Endothelial cell of umbilical vein (primary cell): ENCODE measurements at regions of chr19 and their contacts with region 1.

Region 1: DNA sequence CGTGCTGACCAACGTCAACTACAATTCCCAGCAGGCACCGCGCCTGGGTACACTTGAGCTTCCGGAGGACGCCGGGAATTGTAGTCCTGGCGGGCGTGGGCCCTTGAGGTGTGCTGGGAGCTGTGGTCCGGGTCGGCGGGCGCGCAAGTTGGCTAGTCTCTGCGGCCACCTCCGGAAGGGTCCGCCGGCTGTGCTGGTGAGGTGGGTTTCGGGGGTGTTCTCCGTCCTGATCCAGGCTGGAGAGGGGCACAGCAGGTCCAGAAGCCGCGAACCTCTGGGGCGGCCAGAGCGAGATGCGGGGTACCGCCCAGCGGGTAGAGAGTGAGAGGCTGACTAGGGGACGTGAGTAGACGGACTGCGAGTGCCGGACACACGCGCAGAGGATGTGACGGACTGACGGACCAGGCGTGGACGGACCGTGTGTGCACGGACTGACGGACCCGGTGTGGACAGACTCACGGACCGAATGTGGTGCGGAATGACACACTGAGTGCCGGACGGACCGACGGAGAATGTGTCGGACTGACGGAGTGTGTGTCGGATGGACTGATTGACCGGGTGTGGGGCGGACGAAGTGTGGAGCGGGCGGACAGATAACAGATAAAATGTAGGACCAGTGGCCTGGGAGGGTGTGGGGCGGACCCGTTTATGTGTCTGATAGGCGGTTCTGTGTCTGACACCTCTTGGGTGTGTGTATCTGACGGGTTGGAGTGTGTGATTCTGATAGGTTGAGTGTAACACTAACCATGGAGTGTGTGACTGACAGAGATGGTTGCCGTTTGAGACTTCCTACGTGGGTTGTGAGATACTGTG is at the start of gene ZSCAN22:
- DNase-seq: peak; percentile 96
- H3K4me3 ChIP-seq: peak within 1 kb of the TSS; percentile 3 to 63 (median 56)
- H3K27ac ChIP-seq: peak within 1 kb of the TSS; percentile 1
- H3K4me1 ChIP-seq: peaks cover 12% of the 10 kb centered on the region
- H3K27me3 ChIP-seq: no peaks in the 10 kb centered on the region
- CTCF ChIP-seq: no peak
- POLR2A ChIP-seq: peak; percentile 76
- total RNA-seq, gene ZSCAN22: 3.6 and 3.7 TPM in 2 replicates

Region 2: DNA sequence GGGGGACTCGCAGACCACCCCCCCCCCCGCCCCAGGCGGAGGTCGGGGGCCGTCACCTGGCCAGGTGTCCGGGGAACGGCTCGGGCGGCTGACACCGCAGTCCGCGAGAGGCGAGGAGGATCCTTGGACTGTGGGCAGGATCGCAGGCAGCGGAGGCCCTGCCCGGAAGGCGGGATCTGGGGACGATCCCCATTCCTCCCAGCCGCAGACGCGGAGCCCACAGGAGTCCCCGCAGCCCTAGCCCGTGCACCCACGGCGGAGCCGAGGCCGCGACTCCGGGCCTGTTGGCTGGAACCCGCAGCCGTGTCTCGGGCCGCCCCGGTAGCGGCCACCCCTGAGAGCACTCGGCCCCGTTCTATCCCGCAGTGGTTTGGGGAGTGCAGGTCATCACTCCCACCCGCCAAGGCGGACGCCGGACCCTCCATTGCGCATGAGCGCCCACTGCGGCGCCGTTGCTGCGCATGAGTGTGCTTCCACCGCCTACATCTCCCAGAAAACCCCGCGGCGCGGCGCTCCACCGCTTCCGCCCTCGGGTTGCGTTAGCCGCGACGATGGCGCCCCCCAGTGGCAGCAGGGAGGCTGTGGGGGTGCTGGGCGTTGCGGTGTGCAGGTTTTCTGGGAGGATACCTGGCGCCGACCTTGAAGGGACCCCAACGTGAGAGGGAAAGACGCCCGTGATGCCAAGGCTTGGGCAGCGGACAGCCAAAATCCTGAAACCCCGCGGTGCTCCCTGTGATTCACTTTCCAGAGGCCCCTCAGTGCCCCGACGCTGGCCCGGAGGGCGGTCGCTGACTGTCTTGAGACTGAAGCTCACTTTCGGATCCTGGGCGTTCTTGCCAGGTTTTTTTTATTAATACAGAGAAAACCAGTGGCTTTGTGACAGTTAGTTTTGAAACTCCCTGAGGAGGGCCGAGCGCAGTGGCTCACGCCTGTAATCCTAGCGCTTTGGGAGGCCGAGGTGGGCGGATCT is 172.2 kb before region 1 on chr19:
- CTCF ChIA-PET with region 1: no interaction called
- POLR2A ChIA-PET with region 1: no interaction called
- dilution Hi-C with region 1: no loop called
- intact Hi-C with region 1: no loop called
- DNase-seq: peak; percentile 93
- H3K4me3 ChIP-seq: peak overlapping the region; percentile 39 to 75 (median 63)
- H3K27ac ChIP-seq: no peak overlapping the region
- H3K4me1 ChIP-seq: no peaks in the 10 kb centered on the region
- H3K27me3 ChIP-seq: no peaks in the 10 kb centered on the region
- CTCF ChIP-seq: peak; percentile 96 to 99
- POLR2A ChIP-seq: peak; percentile 74

Region 3: DNA sequence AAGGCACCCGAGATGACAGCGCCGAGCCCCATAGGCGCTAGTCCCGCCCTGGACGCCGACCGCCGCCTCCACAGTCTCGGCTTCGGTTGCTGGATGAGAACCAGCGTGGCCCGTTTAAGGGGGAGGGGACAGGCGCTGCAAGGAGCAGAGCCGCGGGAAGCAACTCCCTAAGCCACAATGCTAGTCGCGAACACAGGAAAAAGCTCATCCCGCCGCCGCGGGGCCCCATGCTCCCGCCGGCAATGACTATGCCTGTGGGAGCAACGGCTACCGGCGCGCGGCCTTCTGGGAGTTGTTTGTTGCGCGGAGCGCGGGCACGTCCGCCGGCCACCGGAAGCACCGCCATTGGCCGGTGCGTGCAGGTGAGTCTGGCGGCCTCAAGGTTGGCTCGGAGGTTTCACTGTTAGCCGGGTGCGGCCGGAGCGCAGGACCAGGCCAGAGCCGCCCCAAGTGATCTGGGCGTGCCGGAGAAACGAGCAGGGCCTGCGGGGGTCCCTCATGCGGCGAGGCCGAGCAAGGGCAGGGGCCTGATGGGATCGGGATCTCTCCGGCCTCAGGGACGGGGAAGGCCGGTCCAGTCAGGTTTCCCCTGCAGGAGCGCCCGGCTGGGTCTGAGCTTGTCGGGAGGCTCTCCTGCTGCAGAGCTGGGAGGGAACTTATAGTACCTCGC is 98.4 kb before region 1 on chr19 and contains the start of gene ZNF544:
- CTCF ChIA-PET with region 1: interaction called, 5 read pairs
- POLR2A ChIA-PET with region 1: no interaction called
- dilution Hi-C with region 1: no loop called
- intact Hi-C with region 1: loop called (anchors 1 kb)
- DNase-seq: peak; percentile 84
- H3K4me3 ChIP-seq: peak within 1 kb of the TSS; percentile 53 to 66 (median 61)
- H3K27ac ChIP-seq: peak within 1 kb of the TSS; percentile 42
- H3K4me1 ChIP-seq: peaks cover 10% of the 10 kb centered on the region
- H3K27me3 ChIP-seq: no peaks in the 10 kb centered on the region
- CTCF ChIP-seq: peak; percentile 6 to 40
- POLR2A ChIP-seq: peak; percentile 92
- total RNA-seq, gene ZNF544: 39.3 and 45.4 TPM in 2 replicates

Region 4: DNA sequence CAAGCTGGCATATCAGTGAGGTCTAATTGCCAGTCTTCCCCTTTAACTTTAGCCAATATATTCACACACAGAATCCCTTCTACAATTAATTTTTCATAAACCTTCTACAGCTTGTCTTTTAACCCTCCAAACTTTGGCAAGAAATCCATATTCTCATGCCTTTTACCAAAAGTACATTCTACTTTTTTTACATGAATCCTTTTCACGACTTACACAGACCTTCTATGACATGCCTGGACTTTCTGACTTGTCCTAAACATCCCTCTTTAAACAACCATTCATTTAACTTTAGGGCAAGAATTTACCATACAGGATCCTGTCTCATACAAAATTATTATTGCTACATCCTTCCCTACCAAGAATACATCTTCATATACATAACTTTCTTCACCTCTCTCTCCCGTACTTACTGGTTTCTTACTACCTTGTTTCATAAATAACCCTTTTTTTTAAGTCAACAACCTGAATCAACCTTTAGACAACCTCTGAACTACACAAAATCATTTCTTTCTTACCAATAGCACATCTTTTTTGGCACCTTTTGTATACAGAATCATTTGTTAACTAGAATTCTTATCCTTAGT is 74.9 kb before region 1 on chr19:
- CTCF ChIA-PET with region 1: no interaction called
- POLR2A ChIA-PET with region 1: no interaction called
- dilution Hi-C with region 1: no loop called
- intact Hi-C with region 1: no loop called
- DNase-seq: no peak
- H3K4me3 ChIP-seq: no peak overlapping the region
- H3K27ac ChIP-seq: no peak overlapping the region
- H3K4me1 ChIP-seq: no peaks in the 10 kb centered on the region
- H3K27me3 ChIP-seq: no peaks in the 10 kb centered on the region
- CTCF ChIP-seq: no peak
- POLR2A ChIP-seq: no peak

Region 5: DNA sequence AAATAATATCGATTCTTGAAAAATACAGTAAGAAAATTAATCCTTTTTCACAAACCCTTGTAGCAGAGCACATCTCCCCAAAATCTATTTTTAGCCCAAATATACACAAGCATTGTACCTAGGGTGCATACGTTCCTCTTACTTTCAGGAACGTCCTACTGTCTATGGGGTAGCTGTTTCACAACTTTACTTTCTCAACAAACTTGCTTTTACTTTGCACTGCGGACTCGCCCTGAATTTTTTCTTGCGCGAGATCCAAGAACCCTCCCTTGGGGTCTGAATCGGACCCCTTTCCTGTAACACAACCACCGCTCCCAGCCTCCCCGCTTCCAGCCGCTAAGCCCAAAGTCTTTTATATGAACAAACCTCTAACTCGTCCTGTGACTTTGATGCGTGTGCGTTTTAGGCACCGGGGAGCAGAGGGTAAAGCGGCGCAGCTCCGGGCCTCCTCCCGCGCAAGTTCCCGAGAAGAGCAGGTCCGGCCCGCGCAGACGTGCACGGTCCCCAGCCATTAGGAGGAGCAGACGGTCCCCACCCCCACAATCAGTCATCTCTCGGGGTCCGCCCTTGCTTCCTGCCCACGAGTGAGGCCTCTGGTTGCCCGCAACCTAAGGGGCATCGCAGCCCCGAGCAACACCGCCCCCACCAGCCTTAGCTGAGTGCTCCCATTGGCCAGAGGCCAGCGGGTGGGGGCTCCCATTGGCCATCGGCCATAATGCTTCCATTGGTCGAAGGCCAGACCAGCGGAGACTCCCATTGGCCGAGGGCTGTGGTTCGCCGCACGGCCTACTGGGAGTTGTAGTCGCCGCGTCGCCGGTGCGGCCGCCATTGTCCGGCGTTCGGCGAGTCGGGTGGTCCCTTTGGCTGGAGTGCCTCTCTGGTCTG is 48.7 kb before region 1 on chr19 and contains the start of gene ZNF8:
- CTCF ChIA-PET with region 1: no interaction called
- POLR2A ChIA-PET with region 1: no interaction called
- dilution Hi-C with region 1: no loop called
- intact Hi-C with region 1: loop called (anchors 2 kb)
- DNase-seq: peak; percentile 99
- H3K4me3 ChIP-seq: peak within 1 kb of the TSS; percentile 67 to 72 (median 70)
- H3K27ac ChIP-seq: peak within 1 kb of the TSS; percentile 76
- H3K4me1 ChIP-seq: peaks cover 8% of the 10 kb centered on the region
- H3K27me3 ChIP-seq: no peaks in the 10 kb centered on the region
- CTCF ChIP-seq: peak in 1 of 2 donors; percentile 22
- POLR2A ChIP-seq: peak; percentile 68
- total RNA-seq, gene ZNF8: 6.3 and 6.8 TPM in 2 replicates

Region 6: GRCh38 chr19:58305065-58305931 is 21.8 kb before region 1 on chr19 and contains the start of gene ERVK3-1:
- CTCF ChIA-PET with region 1: interaction called, 3 read pairs
- POLR2A ChIA-PET with region 1: no interaction called
- dilution Hi-C with region 1: no loop called
- intact Hi-C with region 1: loop called (anchors 1 kb)
- DNase-seq: peak; percentile 98
- H3K4me3 ChIP-seq: peak within 1 kb of the TSS; percentile 44 to 72 (median 49)
- H3K27ac ChIP-seq: peak within 1 kb of the TSS; percentile 95
- H3K4me1 ChIP-seq: peaks cover 9% of the 10 kb centered on the region
- H3K27me3 ChIP-seq: no peaks in the 10 kb centered on the region
- CTCF ChIP-seq: no peak
- POLR2A ChIP-seq: peak; percentile 92
- total RNA-seq, gene ERVK3-1: 25.8 and 28.4 TPM in 2 replicates

Region 7: DNA sequence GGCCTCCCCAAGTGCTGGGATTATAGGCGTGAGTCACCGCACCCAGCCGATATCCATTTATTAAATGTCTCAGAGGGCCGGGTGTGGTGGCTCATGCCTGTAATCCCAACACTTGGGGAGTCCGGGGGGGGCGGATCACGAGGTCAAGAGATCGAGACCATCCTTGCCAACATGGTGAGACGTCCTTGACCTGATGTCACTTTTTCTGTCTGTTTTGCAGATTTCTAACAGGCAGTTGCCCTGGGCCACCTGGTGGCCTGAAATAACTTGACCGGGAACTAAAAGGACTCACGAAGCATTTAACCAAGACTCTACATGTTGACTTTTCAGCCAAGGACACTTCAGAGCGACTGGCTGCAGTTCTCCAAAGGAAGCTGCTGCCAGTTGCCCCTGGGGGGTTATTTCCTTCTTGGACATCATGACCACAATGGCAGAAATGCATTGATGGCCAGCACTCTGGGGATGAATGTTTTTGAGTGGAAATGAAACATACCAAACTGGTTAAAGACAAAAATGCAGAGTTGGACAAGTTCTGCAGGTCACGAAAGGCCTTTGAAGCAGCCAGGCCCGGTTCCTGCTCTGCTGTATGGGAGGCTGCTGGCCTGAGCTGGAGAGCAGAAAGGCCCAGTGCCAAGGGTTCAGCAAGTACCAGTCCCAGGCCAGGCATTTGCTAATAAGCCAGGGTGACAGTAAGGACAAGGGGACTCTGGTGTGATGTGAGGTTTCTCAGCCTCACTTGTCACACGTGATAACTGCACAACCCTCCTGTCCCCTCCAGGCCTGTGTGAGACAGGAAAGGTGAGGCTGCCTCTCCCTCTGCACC is 45.4 kb after region 1 on chr19:
- CTCF ChIA-PET with region 1: no interaction called
- POLR2A ChIA-PET with region 1: no interaction called
- dilution Hi-C with region 1: no loop called
- intact Hi-C with region 1: no loop called
- DNase-seq: no peak
- H3K4me3 ChIP-seq: no peak overlapping the region
- H3K27ac ChIP-seq: no peak overlapping the region
- H3K4me1 ChIP-seq: no peaks in the 10 kb centered on the region
- H3K27me3 ChIP-seq: peaks cover 6 to 19% of the 10 kb centered on the region in 2 experiments
- CTCF ChIP-seq: peak in 1 of 2 donors; percentile 8
- POLR2A ChIP-seq: no peak

Region 8: DNA sequence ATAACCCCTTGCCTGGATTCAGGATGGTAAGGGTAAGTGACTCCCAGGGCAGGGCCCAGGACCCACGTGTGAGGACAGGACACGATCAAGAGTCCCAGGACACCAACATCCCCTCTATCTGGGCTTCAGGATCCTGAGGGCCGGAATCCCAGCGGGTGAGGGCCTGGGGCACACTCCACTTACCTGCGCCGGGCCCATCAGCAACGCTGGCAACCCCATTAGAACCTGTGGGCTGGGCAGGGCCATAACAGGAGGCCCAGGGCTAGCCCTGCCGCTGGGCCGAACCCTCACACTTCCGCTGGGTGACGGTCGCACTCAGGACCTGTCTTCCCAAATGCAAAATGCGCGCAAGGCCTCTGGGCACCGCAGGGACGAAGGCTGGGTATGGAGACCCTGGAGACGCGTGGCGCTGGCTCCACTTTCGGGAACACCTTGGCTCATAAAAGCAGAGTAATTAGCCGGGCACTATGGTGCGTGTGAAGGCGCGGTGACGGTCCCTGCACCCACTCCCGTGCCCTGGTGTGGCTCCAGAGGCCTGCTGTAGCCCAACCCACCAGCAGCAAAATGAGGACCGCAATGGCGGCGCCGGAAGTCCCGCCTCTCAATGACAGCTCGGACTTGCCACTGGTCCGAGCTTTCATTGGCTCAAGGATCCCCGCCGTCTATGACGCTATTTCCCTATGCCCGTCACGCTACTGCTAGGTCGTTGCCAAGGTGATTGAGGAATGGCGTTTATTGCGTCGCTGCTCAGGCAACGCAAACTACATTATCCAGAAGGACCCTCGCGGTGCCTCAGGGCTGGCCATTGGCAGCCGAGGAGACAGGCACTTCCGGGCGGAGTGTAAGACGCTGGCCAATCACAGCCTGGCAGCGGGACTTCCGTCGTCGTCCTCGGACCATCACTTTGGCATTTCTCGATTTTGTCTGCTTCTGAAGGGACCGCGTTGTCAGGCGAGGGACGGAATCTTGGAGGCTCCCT is 112.7 kb after region 1 on chr19 and contains the start of gene ZNF132:
- CTCF ChIA-PET with region 1: no interaction called
- POLR2A ChIA-PET with region 1: no interaction called
- dilution Hi-C with region 1: no loop called
- intact Hi-C with region 1: loop called (anchors 2 kb)
- DNase-seq: peak; percentile 100
- H3K4me3 ChIP-seq: peak within 1 kb of the TSS; percentile 31 to 83 (median 57)
- H3K27ac ChIP-seq: peak within 1 kb of the TSS; percentile 48
- H3K4me1 ChIP-seq: peaks cover 7% of the 10 kb centered on the region
- H3K27me3 ChIP-seq: peaks cover 0 to 2% of the 10 kb centered on the region in 2 experiments
- CTCF ChIP-seq: no peak
- POLR2A ChIP-seq: peak; percentile 67
- total RNA-seq, gene ZNF132: 4.1 and 4.2 TPM in 2 replicates

Region 9: GRCh38 chr19:58499021-58499927 is 172.2 kb after region 1 on chr19:
- CTCF ChIA-PET with region 1: no interaction called
- POLR2A ChIA-PET with region 1: no interaction called
- dilution Hi-C with region 1: no loop called
- intact Hi-C with region 1: loop called (anchors 1 kb)
- DNase-seq: peak; percentile 96
- H3K4me3 ChIP-seq: peak overlapping the region in 2 of 3 experiments; percentile 24 to 45
- H3K27ac ChIP-seq: no peak overlapping the region
- H3K4me1 ChIP-seq: peaks cover 4% of the 10 kb centered on the region
- H3K27me3 ChIP-seq: no peaks in the 10 kb centered on the region
- CTCF ChIP-seq: peak; percentile 19 to 43
- POLR2A ChIP-seq: peak; percentile 73